Activated CD4-positive, alpha-beta memory T cell treated with anti-CD3 and anti-CD28 coated beads, Interleukin-2, amount 10 ng/mL, durations not matched to agents 7 days and 5 days (primary cell): ENCODE measurements at regions of chr20 and their contacts with region 1.

Region 1: DNA sequence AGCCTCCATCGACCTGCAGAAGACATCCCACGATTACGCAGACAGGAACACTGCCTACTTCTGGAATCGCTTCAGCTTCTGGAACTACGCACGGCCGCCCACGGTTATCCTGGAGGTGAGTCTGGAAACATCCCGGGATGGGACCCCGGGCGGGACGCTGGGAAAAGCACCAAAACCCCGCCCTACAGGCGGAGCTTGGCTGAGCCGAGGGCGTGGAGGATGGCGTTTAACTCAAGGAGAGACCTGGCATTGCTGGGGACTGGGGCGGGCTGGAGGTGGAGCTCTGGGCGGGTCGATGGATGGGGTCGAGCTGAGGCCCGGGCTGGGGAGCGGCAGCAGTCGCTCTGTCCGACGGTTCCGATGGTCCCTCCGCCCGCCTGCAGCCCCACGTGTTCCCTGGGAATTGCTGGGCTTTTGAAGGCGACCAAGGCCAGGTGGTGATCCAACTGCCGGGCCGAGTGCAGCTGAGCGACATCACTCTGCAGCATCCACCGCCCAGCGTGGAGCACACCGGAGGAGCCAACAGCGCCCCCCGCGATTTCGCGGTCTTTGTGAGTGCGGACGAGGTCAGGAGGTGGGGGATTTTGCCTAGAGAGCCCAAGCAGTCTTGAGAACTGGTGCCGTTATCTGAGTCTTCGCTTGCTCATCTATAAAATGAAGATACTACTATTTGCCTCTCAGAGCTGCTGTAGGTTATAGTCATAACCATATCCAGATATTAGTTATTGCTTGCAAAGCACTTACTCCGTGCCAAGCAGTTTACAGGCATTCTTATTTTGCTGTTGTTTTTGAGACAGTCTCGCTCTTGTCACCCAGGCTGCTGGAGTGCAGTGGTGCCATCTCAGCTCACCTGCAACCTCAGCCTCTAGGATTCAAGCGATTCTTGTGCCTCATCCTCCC is 3.8 kb downstream of the SPAG4 start:
- DNase-seq: peak; percentile 78
- H3K4me3 Mint-ChIP-seq: peak overlapping the region; percentile 83
- H3K27ac Mint-ChIP-seq: peak overlapping the region; percentile 70
- H3K4me1 Mint-ChIP-seq: peaks cover 45% of the 10 kb centered on the region
- H3K27me3 Mint-ChIP-seq: peaks cover 1% of the 10 kb centered on the region

Region 2: GRCh38 chr20:35511814-35512420 is 107.5 kb before region 1 on chr20:
- CTCF ChIA-PET with region 1: no interaction called
- POLR2A ChIA-PET with region 1: no interaction called
- DNase-seq: no peak
- H3K4me3 Mint-ChIP-seq: no peak overlapping the region
- H3K27ac Mint-ChIP-seq: no peak overlapping the region
- H3K4me1 Mint-ChIP-seq: peaks cover 5% of the 10 kb centered on the region
- H3K27me3 Mint-ChIP-seq: no peaks in the 10 kb centered on the region

Region 3: DNA sequence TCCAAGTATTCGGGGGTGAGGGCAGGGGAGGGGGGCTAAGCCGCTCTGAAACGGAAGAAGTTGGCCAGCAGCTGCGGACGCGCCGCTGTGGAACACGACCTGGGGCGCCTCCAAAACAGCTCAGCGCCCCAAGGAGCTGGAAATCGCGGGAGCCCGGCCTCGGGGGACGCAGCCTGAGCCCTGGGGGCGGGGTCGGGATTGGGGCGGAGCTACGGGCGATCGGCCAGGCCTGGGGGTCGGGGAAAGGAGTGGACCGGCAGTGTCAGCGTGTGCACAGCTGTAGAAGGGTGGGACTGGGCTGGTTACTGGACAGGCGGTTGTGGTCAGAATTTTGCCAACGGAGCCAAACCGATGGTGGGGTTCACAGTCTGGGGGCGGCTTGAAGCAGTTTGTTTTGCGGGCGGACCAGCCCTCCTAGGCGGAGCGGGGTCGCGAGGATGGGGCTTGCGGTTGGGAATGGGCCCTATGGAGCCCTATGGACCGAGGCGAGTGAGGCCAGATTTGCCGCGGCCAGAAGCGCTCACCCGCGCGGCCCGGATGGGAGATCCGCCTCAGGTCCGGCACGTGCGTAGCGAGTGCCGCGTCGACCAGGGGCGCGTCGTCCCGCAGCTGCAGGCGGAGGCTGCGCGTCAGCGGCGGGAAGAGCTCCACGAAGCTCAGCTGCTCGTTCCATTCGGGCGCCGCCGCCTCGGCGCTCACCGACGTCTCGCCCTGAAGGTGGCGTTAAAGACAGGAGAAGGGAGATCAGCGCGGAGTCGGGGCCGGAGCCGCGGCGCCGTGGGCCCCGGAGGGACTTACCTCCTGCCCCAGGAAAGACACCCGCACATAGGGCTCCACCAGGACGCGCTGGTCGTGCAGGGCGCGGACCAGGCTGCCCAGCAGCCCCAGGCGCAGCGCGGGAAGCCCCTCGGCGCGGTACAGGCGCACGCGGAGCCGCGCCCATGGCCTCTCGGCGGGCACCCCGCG is 18.2 kb before region 1 on chr20:
- CTCF ChIA-PET with region 1: interaction called, 23 read pairs
- POLR2A ChIA-PET with region 1: interaction called, 20 read pairs
- DNase-seq: peak; percentile 82
- H3K4me3 Mint-ChIP-seq: peak overlapping the region; percentile 60
- H3K27ac Mint-ChIP-seq: no peak overlapping the region
- H3K4me1 Mint-ChIP-seq: peaks cover 8% of the 10 kb centered on the region
- H3K27me3 Mint-ChIP-seq: peaks cover 57% of the 10 kb centered on the region

Region 4: DNA sequence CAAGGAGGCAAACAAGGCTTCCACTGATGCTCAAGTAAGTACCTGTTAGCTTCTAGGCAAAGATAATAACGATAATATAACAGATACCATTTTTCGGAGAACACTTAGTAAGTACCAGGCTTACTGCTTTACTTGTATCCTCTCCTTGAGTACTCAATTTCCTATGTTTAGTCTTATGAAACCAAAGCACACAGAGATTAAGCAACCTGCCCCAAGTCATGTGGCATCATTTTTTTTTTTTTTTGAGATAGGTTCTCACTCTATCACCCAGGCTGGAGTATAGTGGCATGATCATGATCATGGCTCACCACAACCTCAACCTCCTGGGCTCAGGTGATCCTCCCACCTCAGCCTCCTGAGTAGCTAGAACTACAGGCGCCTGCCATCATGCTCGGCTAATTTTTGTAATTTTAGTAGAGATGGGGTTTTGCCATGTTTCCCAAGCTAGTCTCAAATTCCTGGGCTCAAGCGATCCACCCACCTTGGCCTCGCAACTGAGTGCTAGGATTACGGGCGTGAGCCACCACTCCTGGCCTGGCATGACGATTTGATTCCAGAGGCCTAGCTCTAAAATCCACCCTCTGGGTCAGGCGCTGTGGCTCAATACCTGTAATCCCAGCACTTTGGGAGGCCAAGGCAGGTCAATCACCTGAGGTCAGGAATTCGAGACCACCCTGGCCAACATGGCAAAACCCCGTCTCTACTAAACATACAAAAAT is 10.1 kb after region 1 on chr20:
- CTCF ChIA-PET with region 1: interaction called, 3 read pairs
- POLR2A ChIA-PET with region 1: interaction called, 11 read pairs
- DNase-seq: no peak
- H3K4me3 Mint-ChIP-seq: no peak overlapping the region
- H3K27ac Mint-ChIP-seq: no peak overlapping the region
- H3K4me1 Mint-ChIP-seq: no peaks in the 10 kb centered on the region
- H3K27me3 Mint-ChIP-seq: no peaks in the 10 kb centered on the region

Region 5: DNA sequence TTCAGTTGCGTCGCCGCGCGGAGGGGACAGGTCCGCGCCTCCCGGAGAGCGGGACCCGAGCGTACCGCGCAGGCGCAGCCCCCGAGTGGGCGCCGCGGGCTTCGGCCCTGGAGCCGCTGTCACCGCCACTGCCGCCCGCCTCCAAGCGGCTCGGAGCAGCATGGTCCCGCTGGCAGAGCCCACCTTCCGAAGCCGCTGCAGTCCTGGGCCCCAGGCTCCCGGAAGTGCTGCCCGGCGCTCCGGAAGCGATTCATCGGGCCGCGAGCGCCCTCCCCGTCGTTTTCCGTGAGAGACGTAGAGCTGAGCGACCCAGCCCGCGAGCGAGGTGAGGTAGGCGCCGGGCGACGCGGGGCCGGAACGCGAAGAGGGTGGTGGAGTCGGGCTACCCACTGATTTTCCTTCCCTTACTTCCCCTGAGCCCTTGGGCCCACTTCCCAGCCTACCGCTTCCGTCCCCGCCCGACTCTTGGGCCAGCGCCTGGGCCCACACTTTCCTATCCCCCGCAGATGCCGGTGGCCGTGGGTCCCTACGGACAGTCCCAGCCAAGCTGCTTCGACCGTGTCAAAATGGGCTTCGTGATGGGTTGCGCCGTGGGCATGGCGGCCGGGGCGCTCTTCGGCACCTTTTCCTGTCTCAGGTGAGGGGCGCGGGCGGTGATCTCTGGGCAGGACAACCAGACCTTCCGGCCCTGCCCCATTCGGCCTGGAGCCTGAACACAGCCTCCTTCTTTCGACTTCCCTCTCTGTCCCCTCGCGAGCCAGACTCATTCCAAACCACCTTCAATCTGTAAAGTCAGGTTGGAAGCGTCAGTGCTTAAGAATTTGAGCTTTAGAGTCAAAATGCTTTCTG is 79.9 kb after region 1 on chr20 and contains the starts of genes NFS1 and ROMO1:
- CTCF ChIA-PET with region 1: interaction called, 3 read pairs
- POLR2A ChIA-PET with region 1: interaction called, 48 read pairs
- DNase-seq: peak; percentile 87
- H3K4me3 Mint-ChIP-seq: peak within 1 kb of the TSS; percentile 91
- H3K27ac Mint-ChIP-seq: peak within 1 kb of the TSS; percentile 77
- H3K4me1 Mint-ChIP-seq: peaks cover 56% of the 10 kb centered on the region
- H3K27me3 Mint-ChIP-seq: no peaks in the 10 kb centered on the region
- total RNA-seq, gene NFS1: 28.3 to 30.8 TPM
- total RNA-seq, gene ROMO1: 98.4 to 114 TPM

Region 6: DNA sequence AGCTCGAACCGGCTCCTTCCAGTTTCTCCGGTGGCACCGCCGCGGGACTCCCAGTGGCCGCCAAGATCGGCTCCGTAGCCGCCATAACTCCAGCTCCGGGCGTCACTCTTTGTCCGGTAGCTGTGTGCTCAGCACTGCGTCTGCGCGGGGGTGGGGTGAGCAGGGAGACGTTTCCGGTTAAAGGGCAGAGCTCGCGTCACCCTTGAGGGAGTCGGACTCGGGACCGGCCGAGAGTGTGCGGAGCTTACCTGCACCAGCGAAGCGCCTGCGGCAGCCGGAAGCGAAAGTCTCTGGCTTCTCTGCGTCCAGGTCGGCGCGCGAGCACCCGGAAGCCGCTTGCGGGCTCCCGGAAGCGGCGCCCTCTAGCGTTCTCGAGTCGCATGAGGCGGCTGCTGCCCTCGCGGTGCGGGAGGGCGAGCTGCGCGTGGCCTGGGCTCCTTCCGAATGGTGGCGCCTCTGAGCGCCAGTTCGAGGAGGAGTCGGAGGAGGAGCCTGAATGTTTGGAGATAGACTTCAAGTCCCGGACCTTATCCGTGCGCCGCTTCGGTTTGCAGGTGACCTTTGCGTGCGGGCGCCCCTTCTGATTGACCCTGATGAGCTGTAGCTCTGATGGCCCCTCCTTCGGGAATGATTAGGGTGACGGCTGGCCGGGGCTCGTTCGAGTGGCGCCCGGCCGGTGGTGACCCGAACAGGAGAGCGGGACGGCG is 334.9 kb after region 1 on chr20 and contains the start of gene SCAND1:
- CTCF ChIA-PET with region 1: interaction called, 21 read pairs
- POLR2A ChIA-PET with region 1: interaction called, 25 read pairs
- DNase-seq: peak; percentile 97
- H3K4me3 Mint-ChIP-seq: peak within 1 kb of the TSS; percentile 99
- H3K27ac Mint-ChIP-seq: peak within 1 kb of the TSS; percentile 100
- H3K4me1 Mint-ChIP-seq: peaks cover 25% of the 10 kb centered on the region
- H3K27me3 Mint-ChIP-seq: no peaks in the 10 kb centered on the region
- total RNA-seq, gene SCAND1: 65.5 to 70.0 TPM